Activated CD4-positive, alpha-beta memory T cell treated with anti-CD3 and anti-CD28 coated beads for 36 hours (primary cell): ENCODE measurements at regions of chr19 and their contacts with region 1.

Region 1: GRCh38 chr19:19606021-19606420 is 12.5 kb downstream of the PBX4 start:
- DNase-seq: peak; percentile 71
- H3K4me3 Mint-ChIP-seq: peak overlapping the region; percentile 10
- H3K27ac Mint-ChIP-seq: peak overlapping the region; percentile 88
- H3K4me1 Mint-ChIP-seq: peaks cover 58% of the 10 kb centered on the region
- H3K27me3 Mint-ChIP-seq: no peaks in the 10 kb centered on the region

Region 2: DNA sequence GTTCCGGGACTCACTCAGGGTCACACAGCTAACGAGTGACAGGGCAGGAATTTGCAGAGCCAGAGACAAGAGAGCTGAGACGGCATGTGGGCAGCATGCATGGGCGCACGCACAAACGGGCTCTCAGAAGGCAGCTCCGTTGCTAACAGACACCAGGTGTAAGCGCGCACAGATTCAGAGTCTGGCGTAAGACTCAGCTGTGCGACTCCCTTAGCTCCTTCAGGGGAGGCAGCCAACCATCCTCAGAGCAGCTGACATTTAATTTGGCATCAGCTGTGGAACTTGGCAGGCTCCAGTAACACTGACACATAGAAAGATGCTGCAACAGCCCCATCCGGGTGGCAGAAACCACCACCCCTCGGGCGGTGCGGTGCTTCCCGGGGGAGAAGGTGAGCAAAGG is 325.5 kb before region 1 on chr19:
- CTCF ChIA-PET with region 1: no interaction called
- POLR2A ChIA-PET with region 1: no interaction called
- intact Hi-C with region 1: no loop called
- DNase-seq: no peak
- H3K4me3 Mint-ChIP-seq: no peak overlapping the region
- H3K27ac Mint-ChIP-seq: no peak overlapping the region
- H3K4me1 Mint-ChIP-seq: no peaks in the 10 kb centered on the region
- H3K27me3 Mint-ChIP-seq: no peaks in the 10 kb centered on the region

Region 3: GRCh38 chr19:19515764-19516519 is 90.1 kb before region 1 on chr19 and contains the start of gene NDUFA13:
- CTCF ChIA-PET with region 1: no interaction called
- POLR2A ChIA-PET with region 1: no interaction called
- intact Hi-C with region 1: no loop called
- DNase-seq: peak; percentile 97
- H3K4me3 Mint-ChIP-seq: peak within 1 kb of the TSS; percentile 94
- H3K27ac Mint-ChIP-seq: peak within 1 kb of the TSS; percentile 94
- H3K4me1 Mint-ChIP-seq: peaks cover 28% of the 10 kb centered on the region
- H3K27me3 Mint-ChIP-seq: no peaks in the 10 kb centered on the region
- total RNA-seq, gene NDUFA13: 365 to 374 TPM

Region 4: GRCh38 chr19:19591133-19591825 is 14.7 kb before region 1 on chr19:
- CTCF ChIA-PET with region 1: no interaction called
- POLR2A ChIA-PET with region 1: interaction called, 14 read pairs
- intact Hi-C with region 1: loop called (anchors 2 kb)
- DNase-seq: peak; percentile 89
- H3K4me3 Mint-ChIP-seq: peak overlapping the region; percentile 60
- H3K27ac Mint-ChIP-seq: peak overlapping the region; percentile 100
- H3K4me1 Mint-ChIP-seq: peaks cover 72% of the 10 kb centered on the region
- H3K27me3 Mint-ChIP-seq: no peaks in the 10 kb centered on the region

Region 5: DNA sequence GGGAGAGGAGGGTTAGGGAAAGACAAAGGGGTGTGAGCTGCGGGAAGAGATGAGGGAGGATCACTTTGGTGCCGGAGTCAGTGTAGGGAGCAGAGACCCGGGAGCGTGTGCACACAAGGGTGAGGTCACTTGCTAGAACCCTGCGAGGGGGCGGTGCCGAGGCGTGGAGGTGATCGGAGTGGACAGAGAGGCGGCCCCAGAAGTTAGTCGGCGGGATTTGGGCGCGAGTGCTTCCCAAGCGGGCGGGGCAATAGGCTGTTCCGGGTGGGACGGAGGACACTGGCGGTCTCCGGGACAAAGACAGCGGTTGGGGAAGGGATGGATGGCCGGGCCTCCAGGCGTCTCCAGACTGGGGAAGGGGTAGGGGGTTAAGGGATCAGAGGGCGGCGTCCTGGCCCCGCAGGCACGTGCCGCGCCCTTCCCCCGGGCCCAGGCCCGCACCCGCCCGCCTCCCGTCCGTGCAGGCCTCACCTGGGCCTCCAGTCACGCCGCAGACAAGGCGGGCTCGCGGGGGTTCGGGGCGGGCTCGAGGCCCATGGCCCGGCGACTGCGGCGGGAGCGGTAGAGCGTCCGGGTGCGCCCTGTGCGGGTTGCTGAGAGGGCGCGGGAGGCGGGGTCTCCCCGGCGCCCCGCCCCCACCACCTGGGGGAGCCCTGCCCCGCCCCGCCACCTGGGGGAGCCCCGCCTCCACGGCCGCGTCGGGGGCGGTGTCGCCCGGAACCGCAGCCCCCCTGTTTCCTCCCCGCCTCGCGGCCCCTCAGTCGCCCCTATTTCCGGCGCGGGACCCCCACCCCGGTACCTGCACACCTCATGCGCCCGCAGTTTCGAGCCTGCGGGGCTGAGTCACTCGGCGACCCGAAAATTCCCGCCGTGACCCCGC is 21.8 kb after region 1 on chr19 and contains the start of gene LPAR2:
- CTCF ChIA-PET with region 1: no interaction called
- POLR2A ChIA-PET with region 1: interaction called, 5 read pairs
- intact Hi-C with region 1: loop called (anchors 1 kb)
- DNase-seq: peak; percentile 79
- H3K4me3 Mint-ChIP-seq: peak within 1 kb of the TSS; percentile 90
- H3K27ac Mint-ChIP-seq: peak within 1 kb of the TSS; percentile 93
- H3K4me1 Mint-ChIP-seq: peaks cover 20% of the 10 kb centered on the region
- H3K27me3 Mint-ChIP-seq: no peaks in the 10 kb centered on the region
- total RNA-seq, gene LPAR2: 32.5 to 33.1 TPM